Activated T-helper 1 cell treated with anti-CD3 and anti-CD28 coated beads, Interleukin-12 subunit alpha, Interleukin-12 subunit beta, Interleukin-2, Interleukin-4 antibody, amounts not matched to agents 30 ng/mL and 10 ng/mL and 1 ng/mL, durations not matched to agents 14 hours and 24 hours and 36 hours (primary cell): ENCODE measurements at regions of chr6 and their contacts with region 1.

Region 1: GRCh38 chr6:31702819-31703522 is at the start of gene ABHD16A:
- DNase-seq: peak; percentile 95
- H3K4me3 Mint-ChIP-seq: peak within 1 kb of the TSS; percentile 98
- H3K27ac Mint-ChIP-seq: peak within 1 kb of the TSS; percentile 97
- H3K4me1 Mint-ChIP-seq: peaks cover 26% of the 10 kb centered on the region
- H3K27me3 Mint-ChIP-seq: no peaks in the 10 kb centered on the region
- total RNA-seq, gene ABHD16A: 45.7 and 46.5 TPM in 2 replicates

Region 2: GRCh38 chr6:31546962-31547726 is 155.8 kb before region 1 on chr6 and contains the start of gene NFKBIL1:
- intact Hi-C with region 1: loop called (anchors 1 kb)
- DNase-seq: peak; percentile 88
- H3K4me3 Mint-ChIP-seq: peak within 1 kb of the TSS; percentile 87
- H3K27ac Mint-ChIP-seq: peak within 1 kb of the TSS; percentile 82
- H3K4me1 Mint-ChIP-seq: peaks cover 36% of the 10 kb centered on the region
- H3K27me3 Mint-ChIP-seq: peaks cover 3% of the 10 kb centered on the region
- total RNA-seq, gene NFKBIL1: 18.2 and 18.9 TPM in 2 replicates

Region 3: GRCh38 chr6:31680840-31681671 is 21.9 kb before region 1 on chr6 and contains the start of gene LY6G5C:
- intact Hi-C with region 1: loop called (anchors 1 kb)
- DNase-seq: peak; percentile 30
- H3K4me3 Mint-ChIP-seq: peak within 1 kb of the TSS; percentile 80
- H3K27ac Mint-ChIP-seq: peak within 1 kb of the TSS; percentile 73
- H3K4me1 Mint-ChIP-seq: peaks cover 24% of the 10 kb centered on the region
- H3K27me3 Mint-ChIP-seq: no peaks in the 10 kb centered on the region
- total RNA-seq, gene LY6G5C: 4.7 and 4.9 TPM in 2 replicates

Region 4: GRCh38 chr6:31739639-31740396 is 36.8 kb after region 1 on chr6 and contains the start of gene MSH5:
- intact Hi-C with region 1: loop called (anchors 1 kb)
- DNase-seq: peak; percentile 97
- H3K4me3 Mint-ChIP-seq: peak within 1 kb of the TSS; percentile 98
- H3K27ac Mint-ChIP-seq: peak within 1 kb of the TSS; percentile 99
- H3K4me1 Mint-ChIP-seq: peaks cover 64% of the 10 kb centered on the region
- H3K27me3 Mint-ChIP-seq: peaks cover 3% of the 10 kb centered on the region
- total RNA-seq, gene MSH5: 80.5 and 83.4 TPM in 2 replicates

Region 5: GRCh38 chr6:31795616-31796298 is 92.8 kb after region 1 on chr6 and contains the start of gene VARS1:
- intact Hi-C with region 1: loop called (anchors 1 kb)
- DNase-seq: peak; percentile 84
- H3K4me3 Mint-ChIP-seq: peak within 1 kb of the TSS; percentile 86
- H3K27ac Mint-ChIP-seq: peak within 1 kb of the TSS; percentile 96
- H3K4me1 Mint-ChIP-seq: peaks cover 36% of the 10 kb centered on the region
- H3K27me3 Mint-ChIP-seq: no peaks in the 10 kb centered on the region
- total RNA-seq, gene VARS1: 150 and 161 TPM in 2 replicates

Region 6: GRCh38 chr6:31862344-31863227 is 159.6 kb after region 1 on chr6 and contains the start of gene NEU1:
- intact Hi-C with region 1: loop called (anchors 1 kb)
- DNase-seq: peak; percentile 99
- H3K4me3 Mint-ChIP-seq: peak within 1 kb of the TSS; percentile 97
- H3K27ac Mint-ChIP-seq: peak within 1 kb of the TSS; percentile 94
- H3K4me1 Mint-ChIP-seq: peaks cover 37% of the 10 kb centered on the region
- H3K27me3 Mint-ChIP-seq: peaks cover 3% of the 10 kb centered on the region
- total RNA-seq, gene NEU1: 22.1 and 24.3 TPM in 2 replicates

Region 7: DNA sequence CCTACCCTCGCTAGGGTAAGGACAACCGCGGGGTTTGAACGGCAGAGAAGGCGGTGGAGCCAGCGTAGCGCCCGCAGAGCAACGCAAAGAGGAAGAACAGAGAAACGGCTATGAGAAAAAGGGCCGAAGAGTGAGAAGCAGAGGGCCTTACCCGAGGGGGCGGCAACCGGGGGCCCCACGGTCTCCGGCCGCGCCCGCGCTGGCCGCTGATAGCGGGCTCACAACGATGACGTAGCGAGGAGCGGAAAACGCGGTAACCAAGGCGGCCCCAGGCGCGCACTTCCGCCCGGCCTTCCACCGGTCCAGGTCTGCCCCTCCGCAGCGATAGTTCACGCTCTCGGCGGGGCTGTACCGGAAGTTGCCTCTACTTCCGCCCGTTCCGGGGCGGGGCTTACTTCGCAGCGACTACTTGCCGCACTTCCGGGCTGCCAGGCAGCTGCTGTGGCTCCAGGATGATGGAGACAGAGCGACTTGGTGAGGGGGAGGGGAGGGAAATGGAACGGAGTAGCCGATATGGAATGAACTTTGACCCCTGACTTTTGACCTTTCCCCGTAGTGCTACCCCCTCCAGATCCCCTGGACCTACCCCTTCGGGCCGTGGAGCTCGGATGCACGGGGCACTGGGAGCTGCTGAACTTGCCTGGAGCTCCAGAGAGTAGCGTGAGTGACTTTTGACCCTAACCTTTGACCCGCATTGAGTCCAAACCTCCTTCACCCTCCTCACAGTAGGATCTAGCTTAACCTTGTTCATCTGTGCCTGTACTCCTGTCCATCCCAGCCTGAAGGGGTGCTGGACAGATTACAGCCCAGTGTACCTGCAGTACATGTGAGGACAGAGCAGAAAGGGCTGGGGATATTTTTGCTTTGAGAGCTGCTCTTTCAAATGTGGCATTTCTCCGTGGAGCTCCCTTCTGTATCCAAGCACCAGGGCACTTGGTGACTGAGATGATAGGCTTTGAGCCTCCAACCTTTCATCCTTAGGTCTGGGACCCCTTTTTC is 256.1 kb after region 1 on chr6 and contains the starts of genes NELFE and SKIC2:
- intact Hi-C with region 1: loop called (anchors 1 kb)
- DNase-seq: peak; percentile 99
- H3K4me3 Mint-ChIP-seq: peak within 1 kb of the TSS; percentile 98
- H3K27ac Mint-ChIP-seq: peak within 1 kb of the TSS; percentile 98
- H3K4me1 Mint-ChIP-seq: peaks cover 46% of the 10 kb centered on the region
- H3K27me3 Mint-ChIP-seq: no peaks in the 10 kb centered on the region
- total RNA-seq, gene NELFE: 92.3 and 97.7 TPM in 2 replicates
- total RNA-seq, gene SKIC2: 85.8 and 101 TPM in 2 replicates

Region 8: DNA sequence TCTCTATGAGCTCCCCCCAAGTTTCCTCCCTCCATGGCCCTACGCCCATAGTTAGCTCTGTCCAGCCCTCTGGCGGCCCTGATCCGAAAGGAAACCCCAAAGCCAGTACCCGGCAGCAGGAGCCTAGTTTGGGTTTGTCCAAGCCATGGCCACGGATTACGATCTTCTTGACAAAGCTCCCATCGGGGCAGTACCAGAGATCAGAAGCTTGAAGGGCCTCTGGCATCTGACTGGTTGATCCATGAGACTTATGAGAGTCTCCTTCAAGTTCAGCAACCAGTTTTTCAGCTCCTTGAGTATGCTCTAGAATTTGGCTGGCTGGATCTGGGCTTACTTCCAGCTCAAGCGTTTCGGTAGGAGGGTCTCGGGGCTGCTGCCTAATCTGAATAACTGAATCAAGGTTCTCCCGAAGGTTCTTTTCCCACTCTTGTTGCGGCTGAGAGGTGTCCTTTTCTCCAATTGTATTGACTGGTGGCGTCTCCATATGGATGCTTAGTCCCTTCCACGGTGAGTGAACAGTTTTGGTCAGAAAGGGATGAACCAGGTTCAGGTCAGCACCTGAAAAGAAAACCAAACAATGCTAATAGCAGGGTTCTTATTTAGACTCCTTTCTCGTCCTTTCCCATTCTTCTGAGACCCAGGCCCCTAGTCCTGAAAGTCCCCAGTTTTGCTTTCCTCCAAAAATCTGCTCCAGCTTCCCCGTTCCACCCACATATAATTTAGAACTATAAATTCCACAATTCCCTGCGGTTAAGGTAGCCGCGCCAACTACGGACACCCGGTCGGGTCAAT is 426.5 kb after region 1 on chr6:
- intact Hi-C with region 1: no loop called
- DNase-seq: no peak
- H3K4me3 Mint-ChIP-seq: peak overlapping the region; percentile 96
- H3K27ac Mint-ChIP-seq: peak overlapping the region; percentile 93
- H3K4me1 Mint-ChIP-seq: peaks cover 45% of the 10 kb centered on the region
- H3K27me3 Mint-ChIP-seq: peaks cover 2% of the 10 kb centered on the region